ENCODE measurements at regions of chr16 and their contacts with region 1.

Region 1: DNA sequence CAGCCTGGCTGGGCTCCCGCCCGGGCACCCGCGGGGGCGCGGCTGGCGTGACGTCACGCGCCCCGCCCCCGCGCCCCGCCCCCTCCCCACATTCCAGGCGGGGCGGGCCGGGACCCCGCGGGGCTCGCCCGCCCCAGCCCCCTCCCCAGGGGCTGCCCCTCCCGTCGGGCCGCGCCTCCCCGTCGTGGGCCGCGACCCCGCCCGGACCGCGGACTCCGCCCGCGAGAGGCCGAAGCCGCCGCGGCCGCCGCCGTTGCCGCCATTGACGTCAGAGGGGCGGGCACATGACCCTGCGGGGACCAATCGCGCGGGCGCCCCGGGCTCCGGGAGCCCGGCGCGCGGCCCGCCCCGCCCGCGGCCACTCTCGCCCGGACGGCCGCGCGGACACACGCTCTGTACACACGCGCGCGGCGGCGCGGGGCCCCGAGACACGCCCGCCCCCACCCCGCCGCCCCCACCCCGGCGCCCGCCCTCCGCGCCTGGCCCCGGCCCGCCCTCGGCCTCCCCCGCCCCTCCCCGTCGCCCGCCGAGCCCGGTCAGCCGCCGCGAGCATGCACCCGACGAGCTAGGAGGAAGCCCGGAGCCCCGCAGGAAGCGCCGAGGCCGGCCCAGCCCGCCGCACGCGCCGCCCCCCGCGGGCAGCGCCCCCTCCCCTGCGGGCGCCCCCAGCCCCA is at the start of gene CMIP:
- DNase-seq: peak in 1 of 2 donors; percentile 89
- H3K4me3 ChIP-seq: peak within 1 kb of the TSS; percentile 58 to 75
- H3K27ac ChIP-seq: peak within 1 kb of the TSS; percentile 69 to 70
- H3K4me1 ChIP-seq: peaks cover 0 to 4% of the 10 kb centered on the region in 2 donors
- H3K27me3 ChIP-seq: no peaks in the 10 kb centered on the region
- CTCF ChIP-seq: no peak
- total RNA-seq, gene CMIP: 110 TPM

Region 2: DNA sequence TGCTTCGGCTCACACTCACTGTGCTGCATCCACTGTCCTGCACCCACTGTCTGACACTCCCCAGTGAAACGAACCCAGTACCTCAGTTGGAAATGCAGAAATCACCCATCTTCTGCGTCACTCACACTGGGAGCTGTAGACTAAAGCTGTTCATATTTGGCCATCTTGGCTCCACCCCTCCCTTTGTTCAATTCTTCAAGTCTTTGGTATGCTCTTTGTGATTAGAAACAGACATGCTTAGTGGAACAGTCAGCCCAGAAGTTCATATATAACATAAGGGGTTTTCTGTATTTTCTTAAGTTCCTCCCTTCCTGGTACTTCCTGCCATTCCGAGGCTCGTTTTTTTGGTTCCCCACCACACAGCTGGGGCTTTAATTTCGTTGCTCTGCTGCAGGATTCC is 1302.3 kb before region 1 on chr16:
- intact Hi-C with region 1: no loop called
- DNase-seq: no peak
- H3K4me3 ChIP-seq: no peak overlapping the region
- H3K27ac ChIP-seq: no peak overlapping the region
- H3K4me1 ChIP-seq: no peaks in the 10 kb centered on the region
- H3K27me3 ChIP-seq: no peaks in the 10 kb centered on the region
- CTCF ChIP-seq: no peak

Region 3: DNA sequence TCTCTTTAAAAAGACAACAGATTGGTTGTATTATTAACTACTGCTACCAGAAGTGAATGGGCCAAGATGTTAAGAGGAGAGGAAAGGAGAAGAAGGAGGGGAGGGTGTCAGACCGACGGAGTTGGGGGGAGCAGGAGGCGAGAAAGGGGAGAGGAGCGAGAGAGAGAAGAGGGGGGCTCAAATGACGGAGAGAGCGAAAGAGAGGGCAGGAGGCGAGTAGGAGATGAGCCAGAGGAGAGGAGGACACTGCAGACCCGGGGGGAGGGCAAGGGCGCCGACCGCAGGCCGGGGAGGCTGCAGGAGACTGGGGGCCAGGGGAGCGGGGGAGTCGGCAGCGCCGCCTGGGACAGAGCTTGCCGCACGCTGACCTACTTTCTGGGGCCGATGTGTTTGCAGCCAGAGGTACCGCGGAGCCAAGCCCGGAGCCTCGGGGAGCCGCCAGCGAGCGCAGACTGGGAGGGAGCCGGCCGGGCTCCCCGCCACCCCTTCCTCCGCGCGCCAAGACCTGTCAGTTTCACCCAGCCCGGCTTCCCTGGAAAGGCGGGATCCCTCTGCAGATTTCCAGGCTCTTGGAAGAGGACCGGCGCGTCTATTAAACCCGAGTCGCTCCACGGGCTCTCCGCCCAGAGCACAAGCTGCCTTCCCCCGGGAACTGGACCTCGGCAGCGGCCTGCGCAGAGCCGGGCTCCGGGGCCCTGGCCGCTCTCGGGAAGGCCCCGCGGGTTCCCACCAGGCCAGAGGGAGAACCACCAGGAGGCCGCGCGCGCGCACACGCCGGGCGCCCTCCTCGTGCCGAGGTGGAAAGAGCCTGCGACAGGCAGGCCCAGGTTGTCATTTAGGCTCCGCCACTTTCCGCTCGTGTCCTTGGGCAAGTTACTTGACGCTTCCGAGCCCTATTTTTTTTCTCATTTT is 512.5 kb before region 1 on chr16:
- intact Hi-C with region 1: loop called (anchors 10 kb)
- DNase-seq: peak in 1 of 2 donors; percentile 69
- H3K4me3 ChIP-seq: peak overlapping the region; percentile 63 to 67
- H3K27ac ChIP-seq: peak overlapping the region; percentile 89 to 94
- H3K4me1 ChIP-seq: peaks cover under 1 to 2% of the 10 kb centered on the region in 2 donors
- H3K27me3 ChIP-seq: no peaks in the 10 kb centered on the region
- CTCF ChIP-seq: peak in 1 of 3 experiments; percentile 4

Region 4: DNA sequence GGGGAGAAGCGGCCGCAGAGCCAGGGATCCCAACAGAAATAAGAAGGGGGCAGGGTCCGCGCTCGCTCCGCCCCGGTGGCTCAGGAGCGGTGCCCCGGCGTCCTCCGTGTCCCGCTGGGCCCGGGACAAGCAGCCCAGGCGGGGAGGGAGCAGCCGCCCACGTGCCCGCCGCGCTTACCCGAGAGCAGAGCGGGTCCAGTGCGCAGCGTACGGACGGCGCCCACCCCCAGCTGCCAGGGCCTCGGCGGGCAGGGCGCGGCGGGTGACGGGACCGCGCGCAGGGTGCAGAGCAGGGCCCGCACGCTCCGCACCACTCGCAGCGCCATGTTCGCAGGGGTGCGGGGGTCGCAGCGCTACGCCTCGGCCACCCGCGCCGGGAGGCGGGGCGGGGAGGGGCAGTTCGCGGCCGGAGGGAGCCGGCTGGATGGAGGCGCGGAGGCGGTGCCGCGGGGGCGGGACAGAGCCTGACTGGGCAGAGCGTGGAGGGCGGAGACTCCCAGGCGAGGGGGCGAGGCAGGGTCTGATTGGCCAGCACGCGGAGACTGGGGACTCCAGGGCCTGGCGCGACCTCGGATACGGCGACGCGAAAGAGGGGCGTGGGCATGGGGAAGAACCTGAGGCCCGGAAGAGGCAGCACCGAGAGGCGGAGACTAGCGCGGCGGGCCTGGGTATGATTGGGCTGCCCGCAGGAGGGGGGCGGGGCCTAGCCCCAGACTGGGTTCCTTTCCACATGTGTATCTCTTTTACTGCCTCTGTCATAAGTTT is 348.4 kb before region 1 on chr16 and contains the start of gene GCSH:
- intact Hi-C with region 1: loop called (anchors 5 kb)
- DNase-seq: peak; percentile 97 to 99
- H3K4me3 ChIP-seq: peak within 1 kb of the TSS; percentile 90 to 99
- H3K27ac ChIP-seq: peak within 1 kb of the TSS; percentile 78 to 84
- H3K4me1 ChIP-seq: no peaks in the 10 kb centered on the region
- H3K27me3 ChIP-seq: no peaks in the 10 kb centered on the region
- CTCF ChIP-seq: no peak
- total RNA-seq, gene GCSH: 5.0 TPM

Region 5: DNA sequence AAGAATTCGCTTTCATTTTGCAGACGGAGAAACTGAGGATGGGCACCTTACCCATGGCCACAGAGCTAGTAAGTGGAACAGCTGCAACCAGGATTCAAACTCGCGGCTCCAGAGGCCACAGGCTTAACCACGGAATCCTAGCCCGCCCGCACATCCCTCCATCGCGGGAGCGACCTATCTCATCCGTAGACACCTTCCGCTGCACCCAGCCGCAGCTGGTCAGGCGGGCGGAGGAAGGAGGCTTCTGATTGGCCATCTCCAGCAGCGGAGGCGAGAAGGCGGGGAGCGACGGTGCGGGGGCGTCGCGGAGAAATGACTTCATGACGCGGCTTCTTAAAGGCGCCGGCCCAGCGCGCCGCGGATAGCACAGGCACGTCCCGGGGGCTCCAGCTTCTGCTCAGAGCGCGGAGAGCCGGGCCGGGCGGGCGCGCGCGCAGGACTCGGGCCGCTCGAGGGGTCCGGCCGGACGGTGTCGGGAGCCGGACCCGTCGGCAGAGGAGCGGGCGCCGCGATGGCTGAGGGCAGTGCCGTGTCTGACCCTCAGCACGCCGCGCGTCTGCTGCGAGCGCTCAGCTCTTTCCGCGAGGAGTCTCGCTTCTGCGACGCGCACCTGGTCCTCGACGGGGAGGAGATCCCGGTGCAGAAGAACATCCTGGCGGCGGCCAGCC is 129.8 kb before region 1 on chr16 and contains the start of gene GAN:
- intact Hi-C with region 1: loop called (anchors 5 kb)
- DNase-seq: peak; percentile 88 to 96
- H3K4me3 ChIP-seq: peak within 1 kb of the TSS; percentile 88 to 95
- H3K27ac ChIP-seq: peak within 1 kb of the TSS; percentile 88 to 91
- H3K4me1 ChIP-seq: peaks cover 0 to 16% of the 10 kb centered on the region in 2 donors
- H3K27me3 ChIP-seq: no peaks in the 10 kb centered on the region
- CTCF ChIP-seq: no peak
- total RNA-seq, gene GAN: 2.6 TPM

Region 6: GRCh38 chr16:81429045-81429521 is 15.5 kb before region 1 on chr16:
- intact Hi-C with region 1: no loop called
- DNase-seq: no peak
- H3K4me3 ChIP-seq: no peak overlapping the region
- H3K27ac ChIP-seq: no peak overlapping the region
- H3K4me1 ChIP-seq: no peaks in the 10 kb centered on the region
- H3K27me3 ChIP-seq: no peaks in the 10 kb centered on the region
- CTCF ChIP-seq: peak in 1 of 3 experiments; percentile 47

Region 7: GRCh38 chr16:81486555-81487061 is 42.0 kb after region 1 on chr16:
- intact Hi-C with region 1: loop called (anchors 5 kb)
- DNase-seq: peak in 1 of 2 donors; percentile 85
- H3K4me3 ChIP-seq: no peak overlapping the region
- H3K27ac ChIP-seq: peak overlapping the region in 1 of 2 donors; percentile 50
- H3K4me1 ChIP-seq: peaks cover 0 to 9% of the 10 kb centered on the region in 2 donors
- H3K27me3 ChIP-seq: no peaks in the 10 kb centered on the region
- CTCF ChIP-seq: no peak

Region 8: DNA sequence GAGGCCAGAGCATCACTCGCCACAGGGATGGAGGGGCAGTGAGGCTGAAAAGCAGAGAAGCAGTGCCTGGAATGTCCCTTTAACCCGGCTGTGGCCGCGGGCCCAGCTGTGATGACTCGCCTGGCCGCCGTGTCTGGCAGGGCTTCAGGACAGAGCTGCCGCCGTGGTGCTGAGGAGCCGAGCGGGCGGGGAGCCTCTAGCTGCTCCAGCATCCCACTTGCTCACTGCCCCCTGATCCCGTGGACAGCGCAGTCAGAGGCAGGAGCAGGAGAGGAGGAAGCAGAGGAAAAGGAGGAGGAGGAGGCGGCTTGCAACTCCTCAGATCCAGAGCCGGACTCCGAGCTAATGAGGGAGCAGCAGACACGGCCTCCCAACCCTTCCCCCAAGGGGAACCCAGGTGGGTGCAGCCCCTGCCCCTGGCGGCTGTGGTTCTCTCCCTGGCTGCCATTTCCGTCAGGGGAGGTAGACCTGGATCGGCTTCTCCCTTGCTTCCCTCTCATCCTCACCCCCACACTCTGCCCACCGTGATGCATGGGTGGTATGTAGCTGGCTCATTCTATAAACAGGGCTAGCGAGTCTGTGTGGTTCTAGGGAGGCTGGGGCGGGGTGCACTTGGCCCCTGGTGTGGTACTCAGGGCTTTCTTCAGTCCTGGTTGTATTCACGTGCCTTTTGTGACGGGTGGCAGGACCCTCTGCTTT is 165.7 kb after region 1 on chr16:
- intact Hi-C with region 1: loop called (anchors 5 kb)
- DNase-seq: peak; percentile 27 to 89
- H3K4me3 ChIP-seq: peak overlapping the region in 1 of 2 donors; percentile 10
- H3K27ac ChIP-seq: peak overlapping the region in 1 of 2 donors; percentile 47
- H3K4me1 ChIP-seq: peaks cover 5 to 25% of the 10 kb centered on the region in 2 donors
- H3K27me3 ChIP-seq: no peaks in the 10 kb centered on the region
- CTCF ChIP-seq: no peak